ENCODE measurements at regions of chr2 and their contacts with region 1.

Region 1: DNA sequence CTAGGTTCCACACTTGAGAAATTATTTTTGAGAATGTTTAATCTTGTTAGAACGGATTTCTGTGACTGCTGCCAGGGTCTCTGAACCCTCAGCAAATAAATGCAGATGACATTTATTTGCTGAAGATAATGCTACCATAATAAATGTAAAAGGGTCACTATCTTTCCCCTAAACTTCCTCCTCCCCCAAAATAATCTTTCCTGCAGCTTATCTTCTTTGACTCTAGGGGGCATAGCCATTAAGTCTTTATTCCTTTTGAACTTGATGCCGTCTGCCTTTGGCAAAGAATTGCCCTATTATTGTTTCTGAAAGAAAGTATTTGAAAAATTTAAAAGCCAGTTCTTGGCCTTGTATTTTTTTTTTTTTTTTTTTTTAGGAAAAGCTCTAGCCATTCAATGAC is 63.6 kb upstream of the ACSL3 start:
- DNase-seq: no peak
- H3K4me3 ChIP-seq: no peak overlapping the region
- H3K27ac ChIP-seq: peak overlapping the region in 3 of 4 donors; percentile 21 to 52 (median 50)
- H3K4me1 ChIP-seq: peaks cover 19 to 40% (median 32%) of the 10 kb centered on the region in 4 donors
- H3K27me3 ChIP-seq: no peaks in the 10 kb centered on the region
- CTCF ChIP-seq: peak; percentile 30 to 51 (median 38)
- EP300 ChIP-seq: no peak
- POLR2A ChIP-seq: no peak

Region 2: GRCh38 chr2:222707689-222708525 is 89.4 kb before region 1 on chr2:
- intact Hi-C with region 1: loop called (anchors 5 kb)
- DNase-seq: peak; percentile 94
- H3K4me3 ChIP-seq: no peak overlapping the region
- H3K27ac ChIP-seq: no peak overlapping the region
- H3K4me1 ChIP-seq: peaks cover 14 to 44% (median 40%) of the 10 kb centered on the region in 4 donors
- H3K27me3 ChIP-seq: no peaks in the 10 kb centered on the region
- CTCF ChIP-seq: peak; percentile 93 to 97 (median 97)
- EP300 ChIP-seq: no peak
- POLR2A ChIP-seq: no peak

Region 3: DNA sequence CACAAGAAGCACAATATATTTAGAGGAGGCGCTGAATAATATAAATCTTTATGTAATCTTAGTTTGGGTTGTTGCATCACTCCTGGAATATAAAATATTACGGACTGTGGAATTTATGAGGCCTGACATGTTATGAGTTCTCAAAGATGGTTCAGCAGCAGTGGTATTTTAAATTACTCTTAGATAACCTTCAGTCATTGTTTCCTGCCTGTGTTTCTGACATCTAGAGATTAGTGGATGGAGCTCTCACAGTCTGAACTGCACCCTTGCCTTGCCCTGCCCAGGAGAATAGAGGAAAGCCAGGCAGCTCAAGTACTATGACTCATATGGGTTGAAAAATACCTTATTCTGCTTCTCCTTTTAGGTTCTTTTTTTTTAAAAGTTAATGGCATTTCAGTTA is 133.6 kb after region 1 on chr2:
- intact Hi-C with region 1: no loop called
- DNase-seq: no peak
- H3K4me3 ChIP-seq: no peak overlapping the region
- H3K27ac ChIP-seq: no peak overlapping the region
- H3K4me1 ChIP-seq: no peaks in the 10 kb centered on the region
- H3K27me3 ChIP-seq: no peaks in the 10 kb centered on the region
- CTCF ChIP-seq: no peak
- EP300 ChIP-seq: no peak
- POLR2A ChIP-seq: no peak